Upper lobe of right lung (tissue), 1 donor: ENCODE measurements at regions of chrX and their contacts with region 1.

Region 1: GRCh38 chrX:68828740-68829552 is at the start of gene EFNB1:
- DNase-seq: peak; percentile 92
- ATAC-seq: peak; percentile 94
- H3K4me3 ChIP-seq: peak within 1 kb of the TSS; percentile 73
- H3K27ac ChIP-seq: peak within 1 kb of the TSS; percentile 76
- H3K4me1 ChIP-seq: no peaks in the 10 kb centered on the region
- H3K27me3 ChIP-seq: no peaks in the 10 kb centered on the region
- CTCF ChIP-seq: no peak
- total RNA-seq, gene EFNB1: 29.0 TPM

Region 2: DNA sequence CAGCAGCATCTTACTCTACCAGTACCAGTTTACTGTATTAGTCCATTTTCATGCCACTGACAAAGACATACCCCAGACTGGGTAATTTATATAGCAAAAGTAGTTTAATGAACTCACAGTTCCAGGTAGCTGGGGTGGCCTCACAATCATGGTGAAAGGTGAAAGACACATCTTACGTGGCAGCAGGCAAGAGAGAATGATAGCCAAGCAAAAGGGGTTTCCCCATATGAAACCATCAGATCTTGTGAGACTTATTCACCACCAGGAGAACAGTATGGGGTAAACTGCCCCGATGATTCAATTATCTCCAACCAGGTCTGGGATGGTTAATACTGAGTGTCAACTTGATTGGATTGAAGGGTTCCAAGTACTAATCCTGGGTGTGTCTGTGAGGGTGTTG is 260.8 kb before region 1 on chrX:
- intact Hi-C with region 1: no loop called
- DNase-seq: no peak
- ATAC-seq: no peak
- H3K4me3 ChIP-seq: no peak overlapping the region
- H3K27ac ChIP-seq: no peak overlapping the region
- H3K4me1 ChIP-seq: no peaks in the 10 kb centered on the region
- H3K27me3 ChIP-seq: no peaks in the 10 kb centered on the region
- CTCF ChIP-seq: no peak

Region 3: DNA sequence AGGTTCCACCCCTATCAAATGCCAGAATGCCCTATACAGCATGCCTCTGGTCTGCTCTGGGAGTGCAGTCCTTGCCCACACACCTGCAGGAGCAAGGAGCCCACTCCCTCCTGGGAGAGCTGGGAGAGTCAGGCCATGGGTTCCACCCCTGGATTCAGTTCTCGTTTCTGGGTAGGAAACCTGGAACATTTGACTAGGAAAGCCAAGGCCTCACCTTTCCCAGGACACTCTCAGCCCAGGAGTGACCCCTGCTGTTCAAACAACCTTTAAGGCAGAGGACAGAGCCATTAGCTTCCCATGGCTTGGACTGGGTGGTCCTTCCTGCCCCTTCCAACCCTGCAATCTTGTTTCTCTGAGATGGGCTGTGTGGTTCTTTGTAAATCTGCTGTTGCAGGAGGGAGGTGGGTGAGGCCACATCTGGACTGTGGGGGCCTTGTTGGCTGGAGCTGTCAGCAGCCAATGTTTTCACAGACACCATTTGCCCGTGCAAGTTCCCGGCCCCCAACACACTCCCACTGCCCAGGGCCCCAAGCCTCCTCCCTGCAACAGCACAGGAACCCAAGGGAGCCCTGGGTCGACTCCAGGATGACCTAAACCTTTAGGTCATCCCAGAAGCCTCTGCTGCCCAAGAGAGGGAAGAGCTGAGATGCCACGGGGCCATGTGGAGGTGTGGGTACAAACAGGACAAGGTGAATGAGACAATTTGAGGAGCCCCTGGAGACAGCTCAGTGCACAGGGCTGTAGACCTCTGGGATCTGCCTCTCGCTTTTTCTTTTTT is 231.9 kb after region 1 on chrX:
- intact Hi-C with region 1: loop called (anchors 5 kb)
- DNase-seq: no peak
- ATAC-seq: peak; percentile 76
- H3K4me3 ChIP-seq: no peak overlapping the region
- H3K27ac ChIP-seq: no peak overlapping the region
- H3K4me1 ChIP-seq: no peaks in the 10 kb centered on the region
- H3K27me3 ChIP-seq: no peaks in the 10 kb centered on the region
- CTCF ChIP-seq: peak; percentile 31

Region 4: GRCh38 chrX:69222103-69223090 is 393.5 kb after region 1 on chrX:
- intact Hi-C with region 1: loop called (anchors 10 kb)
- DNase-seq: peak; percentile 78
- ATAC-seq: peak; percentile 92
- H3K4me3 ChIP-seq: no peak overlapping the region
- H3K27ac ChIP-seq: no peak overlapping the region
- H3K4me1 ChIP-seq: no peaks in the 10 kb centered on the region
- H3K27me3 ChIP-seq: no peaks in the 10 kb centered on the region
- CTCF ChIP-seq: peak; percentile 74

Region 5: GRCh38 chrX:69396916-69397315 is 568.0 kb after region 1 on chrX:
- intact Hi-C with region 1: loop called (anchors 10 kb)
- DNase-seq: no peak
- ATAC-seq: no peak
- H3K4me3 ChIP-seq: no peak overlapping the region
- H3K27ac ChIP-seq: no peak overlapping the region
- H3K4me1 ChIP-seq: no peaks in the 10 kb centered on the region
- H3K27me3 ChIP-seq: no peaks in the 10 kb centered on the region
- CTCF ChIP-seq: no peak